ENCODE measurements at regions of chr12 and their contacts with region 1.

Region 1: DNA sequence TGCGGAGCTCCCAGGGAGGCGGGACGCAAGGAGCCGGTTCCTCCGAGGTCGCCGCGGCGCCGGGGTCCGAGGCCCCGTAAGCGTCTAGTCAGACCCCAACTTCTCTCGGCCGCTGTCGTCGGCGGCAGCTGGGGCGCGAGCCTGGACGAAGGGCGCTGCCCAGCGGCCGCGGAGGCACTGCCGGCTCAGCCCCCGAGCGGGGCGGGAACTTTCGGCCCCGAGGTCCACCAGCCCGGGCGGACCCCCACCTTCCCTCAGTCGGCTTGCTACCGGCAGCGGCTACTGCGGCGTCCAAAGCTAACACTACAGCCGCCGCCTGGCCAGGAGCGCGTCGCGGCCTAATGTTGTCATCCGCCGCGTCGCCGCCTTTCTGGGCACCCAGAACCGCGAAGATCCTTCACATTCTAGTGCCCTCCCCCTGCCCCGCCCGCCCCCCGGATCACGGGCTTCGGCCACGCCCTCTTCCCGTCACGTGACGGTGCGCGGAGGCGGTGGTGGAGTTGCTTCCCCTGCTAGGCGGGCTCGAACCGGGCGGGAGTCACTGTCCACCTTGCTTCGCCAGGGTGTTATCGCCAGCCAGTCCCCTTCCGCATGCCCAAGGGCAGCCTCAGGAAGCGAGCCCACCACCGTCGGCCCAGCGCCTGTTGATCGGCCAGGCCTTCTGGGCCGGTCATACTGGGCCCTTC is at the start of gene OSBPL8:
- DNase-seq: peak; percentile 98
- H3K4me3 Mint-ChIP-seq: peak within 1 kb of the TSS; percentile 95
- H3K27ac Mint-ChIP-seq: peak within 1 kb of the TSS; percentile 99
- H3K4me1 Mint-ChIP-seq: peaks cover 38% of the 10 kb centered on the region
- H3K27me3 Mint-ChIP-seq: no peaks in the 10 kb centered on the region
- total RNA-seq, gene OSBPL8: 90.8 and 92.0 TPM in 2 replicates

Region 2: GRCh38 chr12:75390899-75391538 is 1168.5 kb before region 1 on chr12 and contains the start of gene GLIPR1L2:
- intact Hi-C with region 1: loop called (anchors 10 kb)
- DNase-seq: peak; percentile 95
- H3K4me3 Mint-ChIP-seq: peak within 1 kb of the TSS; percentile 94
- H3K27ac Mint-ChIP-seq: peak within 1 kb of the TSS; percentile 92
- H3K4me1 Mint-ChIP-seq: peaks cover 27% of the 10 kb centered on the region
- H3K27me3 Mint-ChIP-seq: peaks cover 3% of the 10 kb centered on the region
- total RNA-seq, gene GLIPR1L2: 0.36 TPM in 1 of 2 replicates, not detected in the other

Region 3: GRCh38 chr12:75635606-75636410 is 923.7 kb before region 1 on chr12:
- intact Hi-C with region 1: loop called (anchors 10 kb)
- DNase-seq: peak; percentile 67
- H3K4me3 Mint-ChIP-seq: peak overlapping the region; percentile 4
- H3K27ac Mint-ChIP-seq: peak overlapping the region; percentile 42
- H3K4me1 Mint-ChIP-seq: peaks cover 29% of the 10 kb centered on the region
- H3K27me3 Mint-ChIP-seq: no peaks in the 10 kb centered on the region

Region 4: GRCh38 chr12:76083904-76084862 is 475.4 kb before region 1 on chr12 and contains the start of gene NAP1L1:
- intact Hi-C with region 1: loop called (anchors 1 kb)
- DNase-seq: peak; percentile 99
- H3K4me3 Mint-ChIP-seq: peak within 1 kb of the TSS; percentile 100
- H3K27ac Mint-ChIP-seq: peak within 1 kb of the TSS; percentile 100
- H3K4me1 Mint-ChIP-seq: peaks cover 42% of the 10 kb centered on the region
- H3K27me3 Mint-ChIP-seq: no peaks in the 10 kb centered on the region
- total RNA-seq, gene NAP1L1: 652 and 689 TPM in 2 replicates

Region 5: DNA sequence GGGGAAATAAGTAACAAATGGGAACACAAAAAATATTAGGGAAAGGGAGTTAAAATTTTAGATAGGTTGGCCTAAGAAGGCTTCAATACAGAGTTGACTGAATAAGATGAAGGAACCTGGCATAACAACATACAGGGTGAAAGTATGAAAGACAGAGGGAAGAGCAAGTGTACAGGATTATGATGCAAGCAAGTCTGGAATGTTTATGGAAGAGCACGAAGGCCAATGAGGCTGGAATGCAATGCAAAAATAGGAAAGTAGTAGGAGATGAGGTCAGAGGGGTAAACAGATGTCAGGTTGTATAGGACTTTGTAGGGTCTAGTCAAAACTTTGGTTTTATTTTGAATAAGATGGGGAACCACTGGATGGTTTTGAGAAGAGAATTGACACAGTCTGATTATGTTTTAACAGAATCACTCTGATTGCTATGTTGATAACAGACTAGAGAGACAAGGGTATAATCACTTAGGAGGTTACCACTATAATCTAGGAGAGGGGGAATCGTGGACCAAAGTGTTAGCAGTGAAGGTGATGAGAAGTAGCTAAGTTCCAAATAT is 96.8 kb before region 1 on chr12:
- intact Hi-C with region 1: loop called (anchors 5 kb)
- DNase-seq: no peak
- H3K4me3 Mint-ChIP-seq: no peak overlapping the region
- H3K27ac Mint-ChIP-seq: no peak overlapping the region
- H3K4me1 Mint-ChIP-seq: peaks cover 15% of the 10 kb centered on the region
- H3K27me3 Mint-ChIP-seq: no peaks in the 10 kb centered on the region

Region 6: GRCh38 chr12:76586764-76587395 is 27.3 kb after region 1 on chr12:
- intact Hi-C with region 1: loop called (anchors 2 kb)
- DNase-seq: peak; percentile 79
- H3K4me3 Mint-ChIP-seq: no peak overlapping the region
- H3K27ac Mint-ChIP-seq: peak overlapping the region; percentile 18
- H3K4me1 Mint-ChIP-seq: peaks cover 11% of the 10 kb centered on the region
- H3K27me3 Mint-ChIP-seq: no peaks in the 10 kb centered on the region